SK-N-SH (cell line): ENCODE measurements at regions of chr2 and their contacts with region 1.

Region 1: GRCh38 chr2:216698895-216699294 is 3.5 kb upstream of the IGFBP5 start:
- DNase-seq: peak; percentile 55
- H3K4me3 ChIP-seq: no peak overlapping the region
- H3K27ac ChIP-seq: peak overlapping the region in 1 of 2 experiments; percentile 98; a peak in 2 of 4 replicates
- H3K4me1 ChIP-seq: peaks cover 44 to 55% of the 10 kb centered on the region in 2 experiments
- H3K27me3 ChIP-seq: no peaks in the 10 kb centered on the region
- CTCF ChIP-seq: peak; percentile 77
- EP300 ChIP-seq: peak in 1 of 2 experiments; percentile 34; a peak in 1 of 4 replicates
- RAD21 ChIP-seq: peak; percentile 99

Region 2: DNA sequence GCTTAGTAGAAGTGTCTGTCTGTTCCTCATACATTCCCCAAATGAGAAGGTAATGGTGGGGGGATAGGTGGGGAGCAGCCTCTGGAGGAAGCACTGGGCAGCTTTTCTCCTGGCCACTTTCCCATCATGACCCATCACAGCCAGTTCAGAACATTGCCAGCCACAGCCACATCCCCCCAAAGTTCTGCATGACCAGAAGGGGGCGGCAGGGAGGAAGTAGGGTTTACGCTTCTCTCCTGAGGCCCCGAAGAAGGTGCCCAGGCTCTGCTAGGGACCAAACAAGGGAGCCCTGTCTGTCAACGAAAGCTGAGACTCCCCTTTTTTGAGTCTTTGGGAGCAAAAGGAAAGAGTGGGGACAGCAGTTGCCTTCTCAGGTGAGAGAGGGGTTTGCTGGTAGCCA is 11.2 kb before region 1 on chr2:
- CTCF ChIA-PET with region 1: interaction called, 42 read pairs
- POLR2A ChIA-PET with region 1: no interaction called
- DNase-seq: no peak
- H3K4me3 ChIP-seq: no peak overlapping the region; a peak in 1 of 4 replicates
- H3K27ac ChIP-seq: no peak overlapping the region
- H3K4me1 ChIP-seq: peaks cover 12 to 29% of the 10 kb centered on the region in 2 experiments; a peak in 3 of 4 replicates
- H3K27me3 ChIP-seq: no peaks in the 10 kb centered on the region
- CTCF ChIP-seq: peak; percentile 53
- EP300 ChIP-seq: no peak
- RAD21 ChIP-seq: no peak

Region 3: GRCh38 chr2:216792222-216793021 is 93.5 kb after region 1 on chr2:
- CTCF ChIA-PET with region 1: interaction called, 7 read pairs
- POLR2A ChIA-PET with region 1: interaction called, 11 read pairs
- DNase-seq: peak; percentile 69
- H3K4me3 ChIP-seq: no peak overlapping the region
- H3K27ac ChIP-seq: peak overlapping the region; percentile 47 to 91
- H3K4me1 ChIP-seq: peaks cover 4 to 42% of the 10 kb centered on the region in 2 experiments; a peak in 3 of 4 replicates
- H3K27me3 ChIP-seq: no peaks in the 10 kb centered on the region
- CTCF ChIP-seq: peak; percentile 33; the same call in 1 of the 2 replicates
- EP300 ChIP-seq: peak in 1 of 2 experiments; percentile 76; a peak in 2 of 4 replicates
- RAD21 ChIP-seq: peak; percentile 35

Region 4: GRCh38 chr2:217166241-217166850 is 467.5 kb after region 1 on chr2:
- CTCF ChIA-PET with region 1: interaction called, 21 read pairs
- POLR2A ChIA-PET with region 1: interaction called, 3 read pairs
- DNase-seq: peak; percentile 30
- H3K4me3 ChIP-seq: no peak overlapping the region
- H3K27ac ChIP-seq: no peak overlapping the region
- H3K4me1 ChIP-seq: peaks cover 4 to 7% of the 10 kb centered on the region in 2 experiments; a peak in 2 of 4 replicates
- H3K27me3 ChIP-seq: no peaks in the 10 kb centered on the region
- CTCF ChIP-seq: peak; percentile 73
- EP300 ChIP-seq: no peak
- RAD21 ChIP-seq: peak; percentile 87